IMR-90 (cell line): ENCODE measurements at regions of chr1 and their contacts with region 1.

Region 1: DNA sequence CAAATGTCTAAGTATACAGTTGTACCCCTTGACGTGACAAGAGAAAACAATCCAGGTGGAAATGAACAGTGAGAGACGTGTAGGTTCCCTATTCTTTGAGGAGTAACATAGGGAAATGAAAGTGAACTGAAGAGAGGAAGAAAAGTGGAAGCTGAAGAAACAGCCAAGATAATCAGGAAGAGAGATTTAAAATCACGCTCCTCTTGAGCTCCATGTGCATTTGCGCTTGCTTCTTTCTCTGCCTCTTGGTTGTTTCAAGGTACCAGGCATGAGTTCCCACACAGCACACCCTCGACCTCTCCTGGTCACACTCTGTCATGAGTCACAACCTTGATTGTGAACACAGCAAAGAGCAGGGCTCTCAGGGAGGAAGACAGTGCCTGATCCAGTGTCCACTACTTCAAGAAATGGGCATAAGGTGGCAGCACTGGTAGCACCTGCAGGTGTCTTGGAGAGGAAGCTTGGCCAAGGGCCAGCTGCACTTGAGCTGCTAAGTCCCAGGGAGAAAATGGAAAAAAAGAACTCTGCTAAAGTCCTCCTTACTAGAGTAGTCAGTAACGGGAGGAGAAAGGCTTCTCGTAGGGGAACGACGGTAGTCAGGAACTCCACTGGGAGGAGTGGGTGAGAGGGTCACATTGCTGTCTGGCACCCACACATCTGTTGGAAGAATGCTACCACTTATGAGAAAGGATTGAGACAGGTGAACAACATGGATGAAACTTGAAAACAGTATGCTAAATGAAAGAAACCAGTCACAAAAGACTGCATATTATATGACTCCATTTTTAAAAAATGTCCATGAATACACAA is 18.3 kb upstream of the ARID1A start:
- DNase-seq: peak; percentile 64
- ATAC-seq: peak; percentile 86
- H3K4me3 ChIP-seq: no peak overlapping the region
- H3K27ac ChIP-seq: no peak overlapping the region
- H3K4me1 ChIP-seq: peaks cover 5% of the 10 kb centered on the region
- H3K27me3 ChIP-seq: no peaks in the 10 kb centered on the region
- CTCF ChIP-seq: peak; percentile 41
- POLR2A ChIP-seq: no peak
- RAD21 ChIP-seq: peak; percentile 41

Region 2: GRCh38 chr1:26627954-26628353 is 49.6 kb before region 1 on chr1:
- CTCF ChIA-PET with region 1: no interaction called
- POLR2A ChIA-PET with region 1: no interaction called
- dilution Hi-C with region 1: no loop called
- in situ Hi-C with region 1: no loop called
- intact Hi-C with region 1: loop called (anchors 5 kb)
- DNase-seq: no peak
- ATAC-seq: no peak
- H3K4me3 ChIP-seq: no peak overlapping the region
- H3K27ac ChIP-seq: no peak overlapping the region
- H3K4me1 ChIP-seq: no peaks in the 10 kb centered on the region
- H3K27me3 ChIP-seq: no peaks in the 10 kb centered on the region
- CTCF ChIP-seq: no peak
- POLR2A ChIP-seq: no peak
- RAD21 ChIP-seq: no peak